GM13976 (cell line): ENCODE measurements at regions of chr9 and their contacts with region 1.

Region 1: GRCh38 chr9:96331236-96331947 is 29.4 kb upstream of the HSD17B3 start:
- DNase-seq: no peak
- CTCF ChIP-seq: no peak

Region 2: DNA sequence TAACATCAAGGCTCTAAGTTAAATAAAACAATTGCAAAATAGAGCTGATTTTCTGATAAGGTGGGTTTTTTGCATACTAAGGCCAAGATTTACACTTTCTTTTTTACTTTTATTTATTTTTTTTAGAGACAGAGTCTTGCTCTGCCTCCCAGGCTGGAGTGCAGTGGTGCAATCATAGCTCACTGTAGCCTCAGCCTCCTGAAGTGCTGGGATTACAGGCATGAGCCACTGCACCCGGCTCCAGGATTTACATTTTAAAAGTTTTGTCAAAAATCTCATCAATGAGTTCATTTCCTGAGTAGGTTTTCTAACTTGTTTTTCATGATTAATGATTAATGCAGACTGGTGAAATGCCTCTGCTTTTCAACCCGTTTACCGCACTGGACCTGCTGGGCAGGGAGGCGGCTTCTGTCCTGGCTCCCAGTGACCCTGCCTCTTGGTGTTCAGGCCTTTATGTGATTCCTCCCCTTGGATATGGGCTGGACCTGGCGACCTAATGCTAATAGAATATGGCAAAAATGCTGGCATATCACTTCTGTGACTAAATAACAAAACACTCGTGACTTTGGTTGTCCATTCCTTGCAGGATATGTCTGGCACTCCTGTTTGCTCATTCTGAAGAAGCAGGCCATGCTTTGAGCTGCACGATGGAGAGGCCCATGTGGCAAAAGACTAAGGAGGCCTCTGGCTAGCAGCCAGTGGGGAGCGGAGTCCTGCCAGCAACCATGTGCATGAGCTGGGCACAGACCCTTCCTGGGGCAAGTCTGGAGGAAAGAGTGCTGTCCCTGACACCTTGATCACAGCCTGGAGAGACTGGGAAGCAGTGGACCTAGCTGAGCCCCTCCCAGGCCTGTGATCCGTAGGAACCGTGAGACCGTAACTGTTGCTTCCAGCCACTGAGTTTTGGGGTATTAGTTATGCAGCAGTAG is 742.4 kb before region 1 on chr9:
- in situ Hi-C with region 1: no loop called
- DNase-seq: no peak
- CTCF ChIP-seq: no peak

Region 3: DNA sequence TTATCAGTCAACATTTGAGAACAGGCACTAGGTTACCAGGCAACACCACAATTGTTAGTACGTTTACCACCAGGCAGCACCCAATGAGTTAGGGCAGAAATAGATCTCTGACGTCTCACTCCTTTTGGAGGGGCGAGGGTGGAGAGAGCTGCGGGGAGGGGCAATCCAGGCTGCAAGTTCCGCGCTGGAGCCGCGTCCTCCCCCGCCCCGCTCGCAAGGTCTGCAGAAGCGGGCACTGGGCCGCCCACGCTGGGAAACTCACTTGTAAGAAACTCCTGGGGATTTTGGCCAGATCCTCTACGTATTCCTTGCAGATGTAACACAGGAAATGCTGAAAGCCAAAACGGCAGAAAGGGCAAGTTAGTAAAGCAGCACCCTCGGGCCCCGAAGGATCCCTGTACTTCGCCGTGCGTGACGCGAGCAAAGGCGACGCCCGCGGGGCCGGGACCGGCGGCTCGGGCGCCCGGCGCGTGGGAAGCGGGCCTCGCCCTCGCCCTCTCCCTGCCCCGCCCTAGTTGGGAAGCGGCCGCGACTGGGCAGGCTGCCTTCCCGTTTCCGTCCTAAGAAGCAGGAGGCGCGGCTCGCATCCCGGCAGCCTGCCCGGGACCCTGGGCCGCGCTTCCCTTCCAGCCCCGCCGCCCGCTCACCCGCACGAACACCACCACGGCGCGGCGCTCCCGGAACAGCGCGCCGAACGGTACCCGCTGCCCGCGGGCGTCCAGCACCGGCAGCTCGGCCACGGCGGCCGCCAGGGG is 323.2 kb after region 1 on chr9:
- in situ Hi-C with region 1: loop called (anchors 10 kb)
- DNase-seq: peak; percentile 73
- CTCF ChIP-seq: no peak

Region 4: GRCh38 chr9:96720435-96720834 is 389.0 kb after region 1 on chr9:
- in situ Hi-C with region 1: no loop called
- DNase-seq: no peak
- CTCF ChIP-seq: no peak